ENCODE measurements at regions of chr2 and their contacts with region 1.

Region 1: GRCh38 chr2:236569573-236569973 is at the start of gene ACKR3:
- DNase-seq: peak; percentile 89
- ATAC-seq: peak; percentile 92
- H3K4me3 ChIP-seq: peak within 1 kb of the TSS; percentile 73
- H3K27ac ChIP-seq: peak within 1 kb of the TSS; percentile 77
- H3K4me1 ChIP-seq: peaks cover 21% of the 10 kb centered on the region
- H3K27me3 ChIP-seq: no peaks in the 10 kb centered on the region
- CTCF ChIP-seq: peak; percentile 59 to 92 (median 71)
- EP300 ChIP-seq: peak; percentile 68 to 74; a peak in 2 of 4 replicates
- POLR2A ChIP-seq: peak; percentile 88
- RAD21 ChIP-seq: peak; percentile 88
- polyA plus RNA-seq, gene ACKR3: 3.1 to 3.8 TPM

Region 2: DNA sequence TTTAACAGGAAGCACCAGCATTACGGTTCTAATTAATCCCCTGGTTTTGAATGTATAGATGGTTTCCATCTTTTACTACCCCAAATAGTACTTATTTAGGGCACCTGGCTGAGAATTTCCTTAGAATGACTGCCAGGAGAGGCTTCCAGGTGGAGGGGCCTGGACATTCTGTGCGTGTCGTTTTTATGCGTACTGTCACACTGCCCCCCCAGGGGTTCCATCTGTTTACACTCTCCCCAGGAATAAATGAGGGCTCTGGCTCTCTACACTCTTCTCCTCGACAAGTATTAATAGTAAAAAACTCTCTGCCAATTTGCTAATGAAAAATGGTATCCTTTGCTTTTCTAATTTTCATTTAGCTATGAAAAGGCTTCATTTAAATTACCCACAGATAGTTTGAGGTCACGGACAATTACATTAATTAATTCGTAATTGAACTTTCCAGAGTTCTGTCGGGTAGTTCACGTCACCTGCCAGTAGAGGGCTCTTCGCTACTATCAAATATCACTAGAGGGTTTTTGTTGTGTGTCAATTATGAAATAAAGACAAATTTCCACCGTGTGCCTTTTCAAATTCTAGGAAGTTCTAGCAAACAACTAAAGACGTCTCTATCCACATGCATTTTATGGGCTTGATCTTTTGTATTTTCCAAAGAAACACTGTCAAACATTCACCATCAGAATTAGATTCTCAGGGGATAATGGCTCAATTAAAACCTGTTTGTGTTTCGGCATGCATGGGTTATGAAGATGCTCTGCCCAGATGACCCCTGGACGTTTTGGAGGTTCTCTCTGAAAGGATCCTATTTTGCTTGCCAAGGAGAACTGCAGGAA is 216.6 kb before region 1 on chr2:
- CTCF ChIA-PET with region 1: interaction called, 11 read pairs
- POLR2A ChIA-PET with region 1: no interaction called
- RAD21 ChIA-PET with region 1: interaction called, 10 read pairs
- SMC1A ChIA-PET with region 1: interaction called, 6 read pairs
- in situ Hi-C with region 1: no loop called
- intact Hi-C with region 1: loop called (anchors 1 kb)
- DNase-seq: no peak
- ATAC-seq: peak; percentile 58
- H3K4me3 ChIP-seq: no peak overlapping the region
- H3K27ac ChIP-seq: no peak overlapping the region
- H3K4me1 ChIP-seq: no peaks in the 10 kb centered on the region
- H3K27me3 ChIP-seq: no peaks in the 10 kb centered on the region
- CTCF ChIP-seq: peak; percentile 63 to 80 (median 75); a peak in 5 of 6 replicates
- EP300 ChIP-seq: no peak
- POLR2A ChIP-seq: no peak
- RAD21 ChIP-seq: peak; percentile 84

Region 3: DNA sequence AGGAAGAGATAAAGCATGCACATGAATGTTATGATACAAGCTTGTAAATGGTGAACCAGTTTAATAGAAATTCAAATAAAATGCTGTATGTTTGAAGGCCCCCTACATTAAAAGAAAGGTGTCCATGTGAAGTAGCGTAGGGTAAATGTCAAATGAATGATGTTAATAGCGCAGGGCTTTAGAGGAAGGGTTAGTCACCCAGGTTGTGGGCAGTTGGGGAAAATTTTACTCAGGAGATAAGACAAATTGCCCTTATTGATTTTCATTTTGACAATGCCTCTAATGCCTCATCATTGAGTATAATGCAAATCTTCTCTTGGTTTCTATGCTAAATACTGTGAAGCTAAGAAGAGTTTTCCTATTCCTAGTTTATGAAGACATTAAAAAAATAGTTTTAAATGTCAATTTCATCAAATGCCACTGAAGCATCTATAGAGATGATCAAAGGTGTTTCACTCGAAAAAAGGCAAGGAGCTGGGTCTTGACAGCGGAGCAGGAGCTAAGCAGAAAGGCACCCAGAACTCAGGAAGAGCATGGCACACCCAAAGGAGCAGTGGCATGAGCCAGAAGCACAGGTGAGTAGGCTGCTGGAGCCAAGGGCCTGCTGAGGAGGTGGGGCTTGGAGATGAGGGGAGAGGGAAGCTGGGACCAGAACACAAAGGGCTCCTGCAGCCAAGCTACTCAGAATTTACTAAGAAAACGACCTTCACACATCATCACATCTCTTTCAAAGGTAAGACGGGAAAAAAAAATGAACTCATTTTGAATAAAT is 129.3 kb before region 1 on chr2:
- CTCF ChIA-PET with region 1: no interaction called
- POLR2A ChIA-PET with region 1: no interaction called
- RAD21 ChIA-PET with region 1: no interaction called
- SMC1A ChIA-PET with region 1: no interaction called
- in situ Hi-C with region 1: no loop called
- intact Hi-C with region 1: no loop called
- DNase-seq: no peak
- ATAC-seq: no peak
- H3K4me3 ChIP-seq: no peak overlapping the region
- H3K27ac ChIP-seq: no peak overlapping the region
- H3K4me1 ChIP-seq: no peaks in the 10 kb centered on the region
- H3K27me3 ChIP-seq: no peaks in the 10 kb centered on the region; a peak in 1 of 4 replicates
- CTCF ChIP-seq: no peak
- EP300 ChIP-seq: no peak
- POLR2A ChIP-seq: no peak
- RAD21 ChIP-seq: no peak

Region 4: GRCh38 chr2:236526455-236527158 is 43.0 kb before region 1 on chr2:
- CTCF ChIA-PET with region 1: interaction called, 18 read pairs
- POLR2A ChIA-PET with region 1: no interaction called
- RAD21 ChIA-PET with region 1: interaction called, 32 read pairs
- SMC1A ChIA-PET with region 1: interaction called, 9 read pairs
- in situ Hi-C with region 1: no loop called
- intact Hi-C with region 1: no loop called
- DNase-seq: no peak
- ATAC-seq: no peak
- H3K4me3 ChIP-seq: no peak overlapping the region
- H3K27ac ChIP-seq: no peak overlapping the region
- H3K4me1 ChIP-seq: no peaks in the 10 kb centered on the region
- H3K27me3 ChIP-seq: no peaks in the 10 kb centered on the region
- CTCF ChIP-seq: no peak
- EP300 ChIP-seq: no peak
- POLR2A ChIP-seq: no peak
- RAD21 ChIP-seq: no peak

Region 5: GRCh38 chr2:236545814-236546480 is 23.6 kb before region 1 on chr2:
- CTCF ChIA-PET with region 1: interaction called, 50 read pairs
- POLR2A ChIA-PET with region 1: interaction called, 27 read pairs
- RAD21 ChIA-PET with region 1: interaction called, 68 read pairs
- SMC1A ChIA-PET with region 1: interaction called, 111 read pairs
- in situ Hi-C with region 1: no loop called
- intact Hi-C with region 1: no loop called
- DNase-seq: peak; percentile 89
- ATAC-seq: peak; percentile 75
- H3K4me3 ChIP-seq: no peak overlapping the region; the same call in 1 of the 2 replicates
- H3K27ac ChIP-seq: peak overlapping the region; percentile 89
- H3K4me1 ChIP-seq: peaks cover 54% of the 10 kb centered on the region
- H3K27me3 ChIP-seq: no peaks in the 10 kb centered on the region
- CTCF ChIP-seq: no peak
- EP300 ChIP-seq: peak in 1 of 2 experiments; percentile 7; a peak in 2 of 4 replicates
- POLR2A ChIP-seq: no peak
- RAD21 ChIP-seq: peak; percentile 13; the same call in 1 of the 2 replicates

Region 6: DNA sequence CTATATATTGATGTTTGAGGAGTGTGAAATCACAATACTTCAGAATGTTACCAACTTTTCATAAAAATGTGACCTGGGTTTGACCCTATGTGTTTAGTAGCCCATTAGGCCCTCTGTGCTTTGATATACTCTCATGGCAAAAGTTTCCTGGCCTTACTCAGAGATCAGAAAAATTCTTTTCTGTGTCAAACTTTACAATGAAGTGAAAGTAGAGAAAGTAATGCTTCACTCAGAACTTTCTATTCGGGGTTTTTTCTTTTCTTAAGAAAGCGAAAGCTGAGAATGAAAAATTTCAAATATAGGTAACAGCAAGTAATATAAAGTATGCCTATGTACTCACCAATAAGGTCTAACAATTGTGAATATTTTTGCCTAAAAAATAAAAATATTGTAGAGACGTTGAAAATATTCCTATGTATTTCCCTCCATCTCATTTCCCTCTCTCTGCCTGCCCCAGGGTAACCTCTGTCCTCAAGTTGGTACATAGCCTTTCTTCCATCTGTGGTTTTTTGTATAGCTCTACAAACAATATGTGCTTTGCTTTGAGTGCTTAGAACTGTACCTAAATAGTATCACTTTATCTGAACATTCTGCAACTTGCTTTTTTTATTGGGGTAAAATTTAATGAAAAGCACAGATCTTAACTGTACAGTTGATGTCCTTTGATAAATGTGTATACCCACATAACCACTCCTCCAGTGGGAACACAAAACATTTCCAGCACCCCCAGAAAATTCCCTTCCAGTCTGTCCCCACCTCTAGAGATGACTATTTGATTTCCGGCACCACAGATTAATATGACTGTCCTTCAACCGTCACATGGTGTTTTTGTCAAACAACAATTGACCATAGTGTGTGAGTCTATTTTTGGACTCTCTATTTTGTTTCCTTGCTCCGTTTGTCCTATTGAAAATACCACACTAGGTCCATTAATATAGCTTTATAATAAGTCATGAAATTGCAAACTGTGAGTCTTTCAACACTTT is 10.3 kb before region 1 on chr2:
- CTCF ChIA-PET with region 1: interaction called, 27 read pairs
- POLR2A ChIA-PET with region 1: interaction called, 13 read pairs
- RAD21 ChIA-PET with region 1: interaction called, 85 read pairs
- SMC1A ChIA-PET with region 1: interaction called, 106 read pairs
- in situ Hi-C with region 1: no loop called
- intact Hi-C with region 1: no loop called
- DNase-seq: no peak
- ATAC-seq: peak; percentile 86
- H3K4me3 ChIP-seq: no peak overlapping the region
- H3K27ac ChIP-seq: peak overlapping the region; percentile 74
- H3K4me1 ChIP-seq: peaks cover 29% of the 10 kb centered on the region
- H3K27me3 ChIP-seq: no peaks in the 10 kb centered on the region
- CTCF ChIP-seq: no peak
- EP300 ChIP-seq: peak; percentile 81 to 85; a peak in 3 of 4 replicates
- POLR2A ChIP-seq: no peak
- RAD21 ChIP-seq: 0 out of 2 replicates have a peak, but pooled peaks have one; percentile 6

Region 7: DNA sequence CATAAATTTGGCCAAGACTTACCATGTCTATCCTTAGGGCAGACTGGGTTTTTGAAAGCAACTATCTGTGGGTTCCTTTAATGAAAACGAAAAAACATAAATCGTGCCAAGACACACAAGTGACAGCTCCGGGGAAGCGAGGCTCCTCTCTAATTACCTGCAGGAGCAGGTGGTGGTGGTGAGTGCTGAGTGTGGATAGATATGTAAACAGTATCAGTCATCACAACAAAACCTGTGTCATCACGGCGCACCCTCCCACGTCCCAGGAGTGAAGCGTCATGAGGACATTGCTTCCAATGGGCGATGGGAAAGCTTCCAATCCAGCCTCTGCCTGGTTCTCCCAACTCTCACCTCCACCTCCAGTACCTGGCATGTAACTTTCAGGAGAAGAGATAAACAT is 31.3 kb after region 1 on chr2:
- CTCF ChIA-PET with region 1: interaction called, 4 read pairs
- POLR2A ChIA-PET with region 1: interaction called, 4 read pairs
- RAD21 ChIA-PET with region 1: interaction called, 10 read pairs
- SMC1A ChIA-PET with region 1: interaction called, 11 read pairs
- in situ Hi-C with region 1: no loop called
- intact Hi-C with region 1: no loop called
- DNase-seq: no peak
- ATAC-seq: no peak
- H3K4me3 ChIP-seq: no peak overlapping the region
- H3K27ac ChIP-seq: no peak overlapping the region
- H3K4me1 ChIP-seq: no peaks in the 10 kb centered on the region
- H3K27me3 ChIP-seq: no peaks in the 10 kb centered on the region; a peak in 2 of 4 replicates
- CTCF ChIP-seq: no peak
- EP300 ChIP-seq: no peak
- POLR2A ChIP-seq: no peak
- RAD21 ChIP-seq: no peak

Region 8: DNA sequence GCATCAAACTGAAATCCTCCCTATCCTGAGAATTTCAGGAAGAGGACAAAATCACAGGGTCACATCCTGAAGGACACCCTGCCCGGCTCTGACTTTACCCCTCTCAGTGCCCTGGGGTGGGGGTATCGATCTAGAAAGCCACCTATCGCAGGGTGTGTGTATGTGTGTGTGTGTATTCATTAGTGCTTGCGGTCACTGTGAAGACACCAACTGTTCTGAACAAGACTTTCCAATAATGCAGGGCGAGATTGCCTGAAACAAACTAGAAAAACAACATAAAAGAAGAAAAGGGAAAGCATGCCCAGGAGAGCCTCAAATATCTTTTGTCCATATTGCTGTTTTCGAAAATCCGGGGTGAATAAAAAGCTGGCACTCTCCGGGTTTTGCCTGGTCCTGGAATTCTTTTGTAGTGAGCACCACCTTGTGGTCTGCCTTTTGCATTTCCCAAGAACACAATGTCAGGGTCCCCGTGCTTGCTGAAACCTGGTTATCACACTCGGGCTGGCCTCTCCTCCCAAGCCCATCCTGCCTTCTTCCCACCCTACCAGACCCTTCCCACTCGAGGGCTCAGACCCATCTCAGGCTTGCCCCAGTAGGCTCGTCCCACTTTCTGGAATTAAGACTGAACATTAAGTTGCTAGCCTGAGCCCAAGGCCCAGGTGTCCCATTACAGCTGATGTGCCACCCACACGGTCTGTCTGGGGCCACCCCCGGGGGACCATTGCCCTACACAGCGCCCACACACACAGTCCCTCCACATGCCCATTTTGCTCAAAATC is 491.1 kb after region 1 on chr2:
- CTCF ChIA-PET with region 1: interaction called, 43 read pairs
- POLR2A ChIA-PET with region 1: interaction called, 4 read pairs
- RAD21 ChIA-PET with region 1: interaction called, 65 read pairs
- SMC1A ChIA-PET with region 1: interaction called, 53 read pairs
- in situ Hi-C with region 1: no loop called
- intact Hi-C with region 1: loop called (anchors 1 kb)
- DNase-seq: no peak
- ATAC-seq: peak; percentile 37
- H3K4me3 ChIP-seq: no peak overlapping the region; the same call in 1 of the 2 replicates
- H3K27ac ChIP-seq: no peak overlapping the region
- H3K4me1 ChIP-seq: peaks cover 38% of the 10 kb centered on the region
- H3K27me3 ChIP-seq: no peaks in the 10 kb centered on the region; a peak in 1 of 4 replicates
- CTCF ChIP-seq: peak; percentile 62 to 84 (median 71); a peak in 5 of 6 replicates
- EP300 ChIP-seq: no peak
- POLR2A ChIP-seq: no peak
- RAD21 ChIP-seq: peak; percentile 86